ENCODE measurements at regions of chr19 and their contacts with region 1.

Region 1: GRCh38 chr19:48325244-48325910 is at the start of gene EMP3:
- DNase-seq: peak in 27 of 42 donors; percentile 17 to 63 (median 33)

Region 2: DNA sequence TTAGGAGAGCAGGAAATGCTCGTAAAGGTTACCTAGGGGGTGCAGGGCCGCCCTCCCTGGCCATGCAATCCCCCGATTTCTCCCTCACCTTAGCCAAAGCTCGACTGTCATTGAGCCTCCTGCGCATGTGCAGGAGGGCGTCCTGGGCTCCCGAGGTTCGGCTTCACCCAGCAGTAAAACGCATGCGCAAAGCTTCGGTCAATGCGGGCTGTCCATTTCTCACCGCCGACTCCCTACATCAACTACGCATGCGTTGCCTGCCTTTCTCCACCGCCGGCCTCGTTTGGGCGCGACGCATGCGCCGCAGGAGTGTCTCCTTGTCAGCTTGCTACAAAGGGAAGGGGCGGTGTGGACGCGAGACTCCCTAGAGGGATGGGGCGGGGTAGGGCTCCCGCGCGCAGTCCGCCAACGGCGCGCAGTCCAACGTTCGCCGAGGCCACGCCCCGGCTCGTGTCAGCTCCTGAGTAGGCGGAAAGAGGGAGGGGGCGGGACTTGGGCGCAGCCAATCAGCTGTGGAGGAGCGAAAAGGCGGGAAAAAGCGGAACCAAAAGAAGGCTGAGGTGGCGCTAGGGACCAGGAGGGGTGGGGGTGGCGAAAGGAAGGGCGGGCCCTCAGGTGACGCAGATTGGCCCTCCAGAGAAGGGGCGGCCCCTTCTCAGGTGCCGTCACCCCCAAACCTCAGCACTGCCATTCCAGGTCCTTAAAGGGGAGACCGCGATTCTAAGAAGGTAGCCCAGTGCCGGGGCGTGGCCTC is 38.6 kb after region 1 on chr19 and contains the starts of genes SYNGR4 and TMEM143:
- intact Hi-C with region 1: loop called (anchors 5 kb)
- DNase-seq: peak; percentile 96 to 99 (median 99)